Heart left ventricle (tissue), 16 donors: ENCODE measurements at regions of chr10 and their contacts with region 1.

Region 1: GRCh38 chr10:7337431-7338171 is 73.2 kb downstream of the SFMBT2 start:
- DNase-seq: no peak
- ATAC-seq: peak in 1 of 4 donors; percentile 24
- H3K4me3 ChIP-seq: no peak overlapping the region
- H3K27ac ChIP-seq: peak overlapping the region in 11 of 12 donors; percentile 6 to 64 (median 20)
- H3K4me1 ChIP-seq: peaks cover 0 to 64% (median 30%) of the 10 kb centered on the region in 12 donors
- H3K27me3 ChIP-seq: no peaks in the 10 kb centered on the region
- CTCF ChIP-seq: no peak
- POLR2A ChIP-seq: no peak

Region 2: DNA sequence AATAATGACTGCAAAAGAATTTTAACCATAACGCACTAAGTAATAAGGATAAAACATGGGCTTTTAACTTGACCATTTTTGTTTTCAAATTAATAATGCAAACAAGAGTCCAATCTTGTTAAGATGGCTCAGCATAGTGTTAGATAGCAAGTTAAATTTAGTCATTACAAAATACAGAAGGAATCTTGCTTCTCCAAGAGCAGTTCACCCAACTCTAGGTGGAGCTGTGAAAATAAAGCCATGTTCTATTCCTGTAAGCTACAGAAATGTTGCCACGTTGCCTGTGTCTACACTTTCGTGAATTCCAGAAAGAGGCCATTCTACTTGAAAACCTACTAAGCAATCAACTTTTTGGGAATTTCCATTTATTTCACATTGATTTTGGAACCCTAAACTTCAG is 118.6 kb before region 1 on chr10:
- intact Hi-C with region 1: loop called in 1 of 10 experiments (anchors 5 kb)
- DNase-seq: no peak
- ATAC-seq: peak; percentile 78 to 97 (median 90)
- H3K4me3 ChIP-seq: no peak overlapping the region
- H3K27ac ChIP-seq: peak overlapping the region in 8 of 12 donors; percentile 12 to 47 (median 32)
- H3K4me1 ChIP-seq: peaks cover 0 to 25% (median 6%) of the 10 kb centered on the region in 12 donors
- H3K27me3 ChIP-seq: no peaks in the 10 kb centered on the region
- CTCF ChIP-seq: peak in 8 of 12 donors; percentile 16 to 50 (median 37)
- POLR2A ChIP-seq: no peak

Region 3: GRCh38 chr10:7260412-7260900 is 77.1 kb before region 1 on chr10:
- intact Hi-C with region 1: loop called in 8 of 10 experiments (anchors 2 to 10 kb)
- DNase-seq: peak in 4 of 5 donors; percentile 73 to 87 (median 80)
- ATAC-seq: peak; percentile 94 to 96 (median 96)
- H3K4me3 ChIP-seq: no peak overlapping the region
- H3K27ac ChIP-seq: peak overlapping the region; percentile 17 to 72 (median 60)
- H3K4me1 ChIP-seq: peaks cover 3 to 55% (median 26%) of the 10 kb centered on the region in 12 donors
- H3K27me3 ChIP-seq: no peaks in the 10 kb centered on the region
- CTCF ChIP-seq: peak; percentile 65 to 88 (median 78)
- POLR2A ChIP-seq: no peak

Region 4: GRCh38 chr10:7397049-7398035 is 59.7 kb after region 1 on chr10:
- intact Hi-C with region 1: loop called in 3 of 10 experiments (anchors 5 to 10 kb)
- DNase-seq: peak in 4 of 5 donors; percentile 53 to 76 (median 70)
- ATAC-seq: peak; percentile 86 to 93 (median 91)
- H3K4me3 ChIP-seq: peak overlapping the region in 7 of 12 donors; percentile 8 to 33 (median 25)
- H3K27ac ChIP-seq: peak overlapping the region; percentile 7 to 86 (median 76)
- H3K4me1 ChIP-seq: peaks cover 0 to 53% (median 32%) of the 10 kb centered on the region in 12 donors
- H3K27me3 ChIP-seq: no peaks in the 10 kb centered on the region
- CTCF ChIP-seq: peak in 2 of 12 donors; percentile 17 to 24
- POLR2A ChIP-seq: no peak